Ovary (tissue), 10 donors: ENCODE measurements at regions of chr3 and their contacts with region 1.

Region 1: DNA sequence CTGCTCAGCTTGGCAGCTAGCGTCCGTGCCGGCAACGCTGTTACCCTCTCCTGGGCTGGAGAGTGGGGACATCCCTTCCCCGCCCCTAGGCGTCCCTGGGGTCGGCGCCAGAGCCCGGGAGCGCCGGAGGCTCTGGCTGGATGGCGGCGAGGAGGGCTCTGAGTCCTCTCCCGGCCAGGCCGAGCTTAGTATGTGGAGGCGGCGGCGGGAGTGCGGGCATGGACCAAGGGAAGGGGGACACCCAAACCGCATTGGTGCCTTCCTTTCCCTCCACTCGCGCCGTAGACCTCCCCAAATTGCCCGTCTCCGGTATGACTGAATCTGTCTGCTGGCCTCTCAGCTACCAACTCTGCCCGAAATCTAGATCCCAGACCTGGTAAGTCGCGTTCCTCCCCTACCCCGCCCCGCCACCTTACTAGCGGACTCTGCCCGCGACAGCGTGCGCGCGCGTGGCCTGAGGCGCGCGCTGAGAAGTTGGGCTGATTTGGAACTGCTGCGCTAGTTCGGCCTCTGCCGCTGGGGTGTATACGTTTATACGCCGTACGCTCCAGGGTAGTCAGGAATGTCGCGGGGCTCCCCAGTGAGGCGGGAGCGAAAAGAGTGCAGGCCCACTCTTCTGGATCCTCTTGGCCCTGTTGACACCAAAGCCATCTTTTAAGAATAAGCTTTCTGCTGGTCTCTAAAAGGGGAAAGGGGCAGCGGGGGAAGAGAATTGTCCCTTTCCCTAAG is 12.2 kb downstream of the ZIC1 start:
- DNase-seq: no peak
- H3K4me3 ChIP-seq: no peak overlapping the region
- H3K27ac ChIP-seq: no peak overlapping the region
- H3K4me1 ChIP-seq: peaks cover 4% of the 10 kb centered on the region
- H3K27me3 ChIP-seq: no peaks in the 10 kb centered on the region
- CTCF ChIP-seq: no peak
- EP300 ChIP-seq: no peak
- POLR2A ChIP-seq: no peak

Region 2: GRCh38 chr3:146052791-146053310 is 1368.5 kb before region 1 on chr3:
- intact Hi-C with region 1: loop called in 1 of 4 experiments (anchors 10 kb)
- DNase-seq: no peak
- H3K4me3 ChIP-seq: no peak overlapping the region
- H3K27ac ChIP-seq: no peak overlapping the region
- H3K4me1 ChIP-seq: no peaks in the 10 kb centered on the region
- H3K27me3 ChIP-seq: no peaks in the 10 kb centered on the region
- CTCF ChIP-seq: no peak
- EP300 ChIP-seq: no peak
- POLR2A ChIP-seq: no peak